HEK293 (cell line): ENCODE measurements at regions of chr9 and their contacts with region 1.

Region 1: DNA sequence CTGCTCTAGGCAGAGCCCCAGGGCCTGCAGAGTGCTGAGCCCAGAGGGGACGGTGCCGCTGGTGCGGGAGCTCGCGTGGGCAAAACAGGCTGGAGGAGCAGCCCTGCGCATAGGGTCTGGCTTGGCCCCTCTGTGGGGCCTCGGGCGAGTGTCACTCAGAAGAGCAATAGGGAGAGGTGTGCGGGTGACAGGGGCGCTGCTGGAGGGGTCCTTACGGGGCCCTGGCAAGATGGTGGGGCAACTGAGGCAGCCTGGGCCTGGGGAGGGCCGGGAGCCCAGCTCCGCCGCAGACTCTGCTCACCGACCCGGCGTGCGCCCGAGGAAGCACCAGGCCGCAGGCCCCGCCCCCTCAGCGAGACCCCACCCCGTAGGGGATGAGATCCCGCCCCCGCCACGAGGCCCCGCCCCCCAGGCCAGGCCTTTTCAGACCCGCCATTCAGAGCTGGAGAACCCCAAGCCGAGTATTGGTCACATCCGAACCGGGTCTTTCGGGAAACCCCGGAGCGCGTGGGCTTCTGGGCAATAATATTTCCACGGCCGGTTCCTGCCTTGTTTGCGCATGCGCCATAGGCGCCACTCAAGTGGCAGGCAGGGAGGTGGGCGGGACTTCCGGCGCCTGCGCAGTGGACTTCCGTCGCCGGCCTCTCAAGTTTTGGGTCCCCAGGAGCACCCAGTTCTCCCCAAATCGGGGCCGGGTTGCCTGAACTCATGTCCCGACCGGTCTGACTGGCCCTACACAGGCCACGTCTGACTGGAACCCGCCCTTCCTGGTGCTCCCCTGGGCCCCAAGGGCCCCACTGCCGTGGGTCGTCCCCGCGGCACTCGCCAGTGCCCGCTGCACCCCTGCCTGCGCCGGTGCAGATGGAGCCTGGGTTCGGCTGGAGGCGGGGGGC is 1.3 kb upstream of the RNF208 start:
- H3K4me3 ChIP-seq: peak overlapping the region; percentile 89
- H3K27ac ChIP-seq: peak overlapping the region; percentile 83
- H3K4me1 ChIP-seq: peaks cover 4% of the 10 kb centered on the region
- CTCF ChIP-seq: no peak

Region 2: DNA sequence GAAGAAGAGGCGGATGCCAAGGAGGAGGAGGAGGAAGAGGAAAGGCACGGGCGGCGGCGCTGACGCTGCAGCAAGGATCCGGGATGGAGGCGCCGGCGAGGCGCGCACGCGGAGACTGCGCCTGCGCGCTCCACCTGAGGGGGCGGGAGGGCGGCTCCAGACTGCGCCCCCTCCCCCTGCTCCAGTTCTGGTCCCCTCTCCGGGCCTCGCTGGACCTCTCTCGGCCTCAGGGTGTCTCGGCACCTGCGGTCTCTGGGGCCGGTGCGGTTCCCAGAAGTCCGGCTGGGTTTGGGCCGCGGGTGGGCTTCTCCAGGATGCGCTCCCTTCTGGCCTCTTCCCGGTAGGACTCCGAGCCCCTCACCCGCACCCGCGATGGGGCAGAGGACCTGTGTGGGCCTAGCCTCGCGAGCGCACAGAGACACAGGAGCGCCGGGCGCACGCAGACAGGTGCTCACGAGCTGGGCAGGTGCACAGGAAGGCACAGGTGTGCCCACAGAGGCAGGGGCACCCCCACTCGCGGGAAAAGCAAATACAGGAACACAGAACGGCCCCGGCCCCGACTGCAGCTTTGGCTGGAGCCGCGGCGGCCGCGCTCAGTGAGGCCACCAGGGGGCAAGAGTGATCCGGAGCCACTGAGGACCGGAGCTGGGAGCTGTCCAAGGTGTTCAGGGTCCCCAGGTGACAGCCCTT is 177.1 kb before region 1 on chr9 and contains the start of gene NPDC1:
- CTCF ChIA-PET with region 1: interaction called, 11 read pairs
- POLR2A ChIA-PET with region 1: interaction called, 8 read pairs
- H3K4me3 ChIP-seq: peak within 1 kb of the TSS; percentile 58
- H3K27ac ChIP-seq: peak within 1 kb of the TSS; percentile 79; the same call in 1 of the 2 replicates
- H3K4me1 ChIP-seq: peaks cover 5% of the 10 kb centered on the region; the same call in 1 of the 2 replicates
- CTCF ChIP-seq: peak; percentile 87

Region 3: GRCh38 chr9:137086531-137087408 is 136.6 kb before region 1 on chr9 and contains the start of gene MAN1B1:
- CTCF ChIA-PET with region 1: interaction called, 9 read pairs
- POLR2A ChIA-PET with region 1: interaction called, 14 read pairs
- H3K4me3 ChIP-seq: peak within 1 kb of the TSS; percentile 57
- H3K27ac ChIP-seq: peak within 1 kb of the TSS; percentile 70
- H3K4me1 ChIP-seq: 0 out of 2 replicates have a peak, but pooled peaks cover 3% of the 10 kb centered on the region
- CTCF ChIP-seq: no peak

Region 4: GRCh38 chr9:137150617-137151457 is 72.5 kb before region 1 on chr9:
- CTCF ChIA-PET with region 1: no interaction called
- POLR2A ChIA-PET with region 1: interaction called, 15 read pairs
- H3K4me3 ChIP-seq: no peak overlapping the region
- H3K27ac ChIP-seq: no peak overlapping the region
- H3K4me1 ChIP-seq: no peaks in the 10 kb centered on the region
- CTCF ChIP-seq: no peak

Region 5: DNA sequence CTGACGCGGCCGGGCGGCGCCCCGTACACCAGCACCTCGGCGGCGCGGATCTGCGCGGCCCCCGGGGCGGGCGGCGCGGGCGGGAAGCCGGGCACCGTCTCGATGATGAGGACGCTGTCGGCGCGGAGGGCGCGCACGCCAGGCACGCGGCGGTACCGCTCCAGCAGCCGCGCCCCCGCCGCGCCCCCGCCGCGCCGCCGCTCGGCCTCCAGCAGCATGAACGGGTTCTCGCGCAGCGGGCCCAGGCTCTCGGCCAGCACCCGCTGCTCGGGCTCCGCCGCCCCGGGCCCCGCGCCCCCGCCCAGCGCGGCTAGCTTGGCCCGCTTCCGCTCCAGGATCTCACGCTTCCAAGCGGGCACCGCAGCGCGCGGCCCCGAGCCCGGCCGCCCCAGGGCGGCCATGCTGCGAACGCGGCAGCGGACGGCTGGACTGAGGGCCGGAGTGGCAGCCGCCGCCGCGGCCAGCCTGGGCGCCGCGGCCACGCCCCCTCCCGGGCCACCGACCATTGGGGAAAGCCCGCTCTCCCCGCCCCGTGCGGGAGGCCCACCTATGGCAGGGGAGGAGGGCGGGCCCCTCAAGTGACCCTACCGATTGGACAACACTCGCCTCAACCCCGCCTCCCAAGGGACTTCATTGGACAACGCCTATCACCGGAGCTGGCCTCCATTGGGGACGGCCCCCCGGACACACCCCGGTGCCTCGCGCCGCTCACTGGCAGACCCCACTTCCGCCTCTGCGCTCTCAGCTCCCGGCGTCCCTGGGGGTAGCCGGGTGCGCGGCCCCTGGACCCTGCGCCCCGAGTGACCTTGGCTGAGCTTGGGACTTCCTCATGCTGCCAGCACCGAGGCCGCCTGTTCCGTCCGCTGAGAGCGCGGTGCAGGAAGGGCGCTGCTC is 22.8 kb before region 1 on chr9 and contains the start of gene TPRN:
- CTCF ChIA-PET with region 1: interaction called, 7 read pairs
- POLR2A ChIA-PET with region 1: interaction called, 304 read pairs
- H3K4me3 ChIP-seq: peak within 1 kb of the TSS; percentile 86
- H3K27ac ChIP-seq: peak within 1 kb of the TSS; percentile 57; the same call in 1 of the 2 replicates
- H3K4me1 ChIP-seq: peaks cover 9% of the 10 kb centered on the region
- CTCF ChIP-seq: no peak